ENCODE measurements at regions of chr1 and their contacts with region 1.

Region 1: DNA sequence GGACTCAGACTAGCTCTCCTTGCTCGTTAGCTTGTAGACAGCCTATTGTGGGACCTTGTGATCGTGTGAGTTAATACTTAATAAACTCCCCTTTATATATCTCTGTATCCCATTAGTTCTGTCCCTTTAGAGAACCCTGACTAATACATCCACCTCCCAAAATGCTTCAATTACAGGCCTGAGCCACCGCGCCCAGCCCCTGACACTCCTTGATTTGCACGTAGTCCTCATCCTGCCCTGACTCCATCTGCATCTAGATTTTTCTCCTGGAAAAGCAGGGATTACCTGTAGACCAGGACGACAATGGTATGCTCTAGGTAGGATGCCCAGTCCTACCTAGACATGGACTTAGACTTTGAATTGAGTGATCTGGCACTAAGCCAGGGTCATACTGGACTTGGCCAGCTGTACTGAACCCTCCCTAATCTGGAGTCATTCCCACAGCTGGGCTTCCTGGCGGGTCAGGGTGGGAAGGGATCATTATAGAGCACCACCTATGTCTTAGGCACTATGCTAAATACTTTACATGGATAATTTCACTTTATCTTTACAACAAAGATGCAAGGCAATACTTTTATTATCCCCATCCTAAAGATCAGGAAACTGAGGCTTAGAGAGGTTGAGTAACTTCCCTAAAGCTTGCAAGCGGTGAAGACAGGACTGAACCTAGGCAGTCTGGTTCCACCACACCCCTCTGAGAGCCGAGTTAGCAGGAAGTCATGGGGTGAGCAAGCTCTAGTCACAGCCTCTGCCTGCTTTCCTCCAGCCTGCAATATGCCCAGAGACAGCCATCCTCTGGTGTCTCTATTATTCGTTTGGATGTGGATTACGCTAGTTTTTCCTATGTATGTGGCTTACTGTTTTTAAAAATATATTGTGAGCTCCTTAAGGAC is 89.4 kb downstream of the DTL start:
- DNase-seq: no peak
- H3K4me3 Mint-ChIP-seq: no peak overlapping the region
- H3K27ac Mint-ChIP-seq: no peak overlapping the region
- H3K4me1 Mint-ChIP-seq: peaks cover 27% of the 10 kb centered on the region
- H3K27me3 Mint-ChIP-seq: no peaks in the 10 kb centered on the region

Region 2: DNA sequence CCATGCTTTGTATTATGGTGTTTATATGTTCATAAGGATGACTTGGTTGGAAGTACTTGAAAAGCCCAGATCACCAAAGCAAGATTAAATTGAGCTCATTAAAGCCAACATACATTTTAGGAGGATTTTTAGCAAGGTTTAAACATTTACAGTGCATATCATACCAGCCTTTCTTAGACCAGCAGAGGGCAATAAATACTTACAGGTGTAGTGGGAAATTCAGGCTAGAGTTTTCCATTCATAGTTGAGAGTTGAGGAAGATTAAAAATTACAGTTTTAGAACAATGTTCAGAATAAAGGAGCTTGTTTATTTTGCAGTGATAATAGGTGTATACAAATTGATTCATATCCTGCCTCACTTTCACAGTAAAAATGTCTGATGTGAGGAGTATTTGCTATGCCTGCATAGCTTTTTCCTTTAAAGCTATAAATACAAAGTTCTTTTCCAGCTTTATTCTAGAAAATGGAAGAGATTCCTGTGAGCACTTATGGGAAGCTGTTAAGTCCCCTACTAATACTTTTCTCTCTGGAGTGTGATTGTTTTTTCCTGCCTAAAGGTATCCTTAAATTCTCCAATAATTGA is 54.1 kb before region 1 on chr1:
- intact Hi-C with region 1: loop called (anchors 5 kb)
- DNase-seq: no peak
- H3K4me3 Mint-ChIP-seq: no peak overlapping the region
- H3K27ac Mint-ChIP-seq: no peak overlapping the region
- H3K4me1 Mint-ChIP-seq: peaks cover 4% of the 10 kb centered on the region
- H3K27me3 Mint-ChIP-seq: no peaks in the 10 kb centered on the region

Region 3: DNA sequence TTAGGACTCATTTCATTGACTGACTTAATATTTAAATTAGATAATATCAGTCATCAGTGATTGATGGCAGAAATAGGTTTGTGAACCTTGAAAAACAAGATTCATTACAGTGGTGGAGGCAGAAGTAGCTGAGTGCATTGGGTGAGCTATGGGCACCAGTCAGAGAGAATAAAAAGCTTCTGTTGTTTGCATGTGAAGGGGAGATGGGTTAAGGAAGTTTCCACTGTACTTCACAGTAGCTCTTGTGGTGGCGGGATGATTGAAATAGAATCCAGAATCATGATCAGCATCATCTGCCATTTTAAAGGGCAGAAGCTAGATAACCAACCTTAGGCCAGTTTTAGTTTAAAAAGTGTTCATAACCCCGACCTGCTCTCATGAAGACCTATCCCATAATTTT is 23.2 kb before region 1 on chr1:
- intact Hi-C with region 1: loop called (anchors 2 kb)
- DNase-seq: no peak
- H3K4me3 Mint-ChIP-seq: no peak overlapping the region
- H3K27ac Mint-ChIP-seq: peak overlapping the region; percentile 81
- H3K4me1 Mint-ChIP-seq: peaks cover 39% of the 10 kb centered on the region
- H3K27me3 Mint-ChIP-seq: no peaks in the 10 kb centered on the region

Region 4: DNA sequence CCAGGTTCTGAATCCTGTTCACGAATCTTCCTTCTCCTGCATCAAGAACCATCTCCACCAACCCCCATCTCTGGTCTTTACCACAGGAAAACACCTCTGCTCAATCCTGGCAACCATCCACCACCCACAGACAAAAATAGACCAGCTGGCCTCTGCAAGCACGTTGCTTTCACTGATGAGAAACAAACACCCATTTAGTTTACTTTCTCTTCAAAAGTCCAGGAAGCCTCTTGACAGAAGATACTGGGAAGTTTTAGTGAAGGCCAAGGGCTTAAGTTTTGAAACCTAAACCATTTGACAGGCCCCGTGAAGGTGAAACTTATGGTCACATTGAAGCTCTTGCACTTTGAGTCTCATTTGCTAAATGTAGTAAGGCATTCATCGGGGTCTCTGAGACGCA is 37.7 kb after region 1 on chr1:
- intact Hi-C with region 1: loop called (anchors 1 kb)
- DNase-seq: peak; percentile 17
- H3K4me3 Mint-ChIP-seq: no peak overlapping the region
- H3K27ac Mint-ChIP-seq: peak overlapping the region; percentile 7
- H3K4me1 Mint-ChIP-seq: peaks cover 27% of the 10 kb centered on the region
- H3K27me3 Mint-ChIP-seq: no peaks in the 10 kb centered on the region

Region 5: DNA sequence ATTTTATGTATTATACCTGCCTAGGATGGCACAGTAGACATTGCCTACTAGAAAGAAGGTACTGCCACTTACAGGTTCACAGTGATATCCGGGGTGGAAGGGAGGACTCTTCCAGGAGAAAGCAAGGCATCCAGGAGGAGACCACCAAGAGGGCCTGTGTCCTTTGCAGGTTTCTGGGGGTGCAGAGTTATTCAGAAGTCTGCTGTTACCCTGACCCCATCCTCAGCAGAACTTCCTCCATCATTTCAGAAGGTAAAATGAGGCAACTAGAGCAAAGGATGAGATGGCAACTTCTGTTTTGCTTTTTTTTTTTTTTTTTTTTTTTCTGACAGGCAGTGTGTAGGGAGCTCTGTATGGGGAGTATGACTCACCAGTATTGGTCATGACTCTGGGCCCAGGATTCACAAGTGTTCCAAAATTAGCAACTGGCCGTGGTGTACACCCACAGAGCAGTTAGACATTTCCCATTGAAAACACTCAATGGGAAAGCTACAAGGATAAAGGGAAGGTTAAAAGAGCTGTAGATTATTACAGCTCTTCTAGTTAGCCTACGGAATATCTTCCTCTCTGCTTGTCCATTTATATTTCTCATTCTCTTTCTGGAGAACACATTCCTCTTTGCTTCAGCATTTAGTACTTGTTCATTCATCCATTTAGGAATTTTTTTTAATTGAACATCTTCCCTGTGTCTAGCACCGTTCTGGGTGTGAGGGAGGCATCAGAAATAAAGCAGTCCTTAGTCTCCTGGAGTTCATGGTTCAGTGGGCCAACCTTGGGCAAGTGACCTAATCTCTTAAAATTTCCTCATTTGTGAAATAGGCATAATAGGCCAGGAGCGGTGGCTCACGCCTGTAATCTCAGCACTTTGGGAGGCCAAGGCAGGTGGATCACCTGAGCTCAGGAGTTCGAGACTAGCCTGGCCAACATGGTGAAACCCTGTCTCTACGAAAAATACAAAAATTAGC is 109.8 kb after region 1 on chr1:
- intact Hi-C with region 1: loop called (anchors 5 kb)
- DNase-seq: no peak
- H3K4me3 Mint-ChIP-seq: peak overlapping the region; percentile 22
- H3K27ac Mint-ChIP-seq: peak overlapping the region; percentile 69
- H3K4me1 Mint-ChIP-seq: peaks cover 49% of the 10 kb centered on the region
- H3K27me3 Mint-ChIP-seq: no peaks in the 10 kb centered on the region

Region 6: DNA sequence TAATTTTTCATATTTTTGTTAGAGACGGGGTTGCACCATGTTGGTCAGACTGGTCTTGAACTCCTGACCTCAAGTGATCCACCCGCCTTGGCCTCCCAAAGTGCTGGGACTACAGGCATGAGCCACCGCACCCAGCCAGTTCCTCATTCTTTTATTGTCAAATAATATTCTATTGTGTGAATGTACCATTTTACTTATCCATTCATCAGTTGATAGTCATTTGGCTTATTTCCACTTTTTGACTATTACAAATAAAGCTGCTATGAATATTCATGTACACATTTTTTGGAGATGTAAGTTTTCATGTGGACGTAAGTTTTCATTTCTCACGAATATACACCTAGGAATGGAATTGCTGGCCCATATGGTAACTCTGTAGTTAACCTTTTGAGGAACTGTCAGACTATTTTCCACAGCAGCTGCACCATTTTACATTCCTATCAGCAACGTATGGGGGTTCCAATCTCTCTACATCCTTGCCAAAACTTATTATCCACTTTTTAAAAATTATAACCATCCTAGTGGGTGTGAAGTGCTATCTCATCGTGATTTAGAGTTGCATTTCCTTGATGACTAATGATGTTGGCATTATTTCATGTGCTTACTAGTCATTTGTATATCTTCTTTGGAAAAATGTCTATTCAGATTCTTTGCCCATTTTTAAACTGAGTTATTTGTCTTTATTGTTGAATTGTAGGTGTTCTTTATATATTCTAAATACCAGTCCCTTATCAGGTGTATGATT is 277.1 kb after region 1 on chr1:
- intact Hi-C with region 1: no loop called
- DNase-seq: no peak
- H3K4me3 Mint-ChIP-seq: no peak overlapping the region
- H3K27ac Mint-ChIP-seq: peak overlapping the region; percentile 12
- H3K4me1 Mint-ChIP-seq: peaks cover 10% of the 10 kb centered on the region
- H3K27me3 Mint-ChIP-seq: no peaks in the 10 kb centered on the region

Measured in activated T-helper 2 cell treated with anti-CD3 and anti-CD28 coated beads, Interferon-gamma antibody, Interleukin-2, Interleukin-4, amounts not matched to agents 10 μg/mL and 5 μg/mL and 100 μg/mL, durations not matched to agents 14 hours and 24 hours and 36 hours (primary cell).